ENCODE measurements at regions of chr22 and their contacts with region 1.

Region 1: DNA sequence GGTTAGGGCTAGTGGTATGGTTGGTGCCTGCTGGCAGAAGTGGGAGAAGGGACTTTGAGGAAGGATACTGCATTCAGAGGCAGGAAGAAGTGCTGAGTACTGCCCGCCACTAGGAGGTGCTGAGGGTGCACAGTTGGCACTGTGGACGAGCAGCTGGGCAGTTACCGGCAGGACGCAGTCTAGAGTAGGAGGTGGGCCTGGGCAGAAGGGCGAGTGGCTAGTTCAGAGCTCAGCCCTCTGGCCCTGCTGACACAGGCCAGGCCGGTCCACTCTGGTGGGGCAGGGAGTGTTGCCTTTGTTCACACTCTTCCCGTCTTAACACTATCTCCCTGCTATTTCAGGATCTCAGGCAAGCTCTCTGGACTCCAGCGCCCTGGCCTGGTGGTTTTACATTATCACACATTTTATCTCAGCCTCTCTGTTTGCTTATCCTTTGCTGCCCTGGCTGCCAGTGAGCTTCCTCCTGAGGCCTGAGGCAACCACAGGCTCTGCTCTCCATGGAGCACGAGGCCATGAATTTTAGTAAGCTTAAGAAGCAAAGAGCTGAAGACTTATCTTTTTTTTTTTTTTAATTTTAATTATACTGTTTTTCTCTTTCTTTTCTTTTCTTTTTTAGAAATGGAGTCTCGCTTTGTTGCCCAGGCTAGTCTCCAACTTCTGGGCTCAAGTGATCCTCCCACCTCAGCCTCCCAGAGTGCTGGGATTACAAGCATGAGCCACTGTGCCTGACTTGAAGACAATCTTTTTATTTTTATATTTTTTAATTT is 26.9 kb downstream of the SNAP29 start:
- DNase-seq: peak; percentile 89
- ATAC-seq: peak; percentile 98
- H3K4me3 Mint-ChIP-seq: no peak overlapping the region
- H3K27ac Mint-ChIP-seq: peak overlapping the region; percentile 68
- H3K4me1 Mint-ChIP-seq: peaks cover 3% of the 10 kb centered on the region; the same call in 1 of the 2 replicates
- H3K27me3 Mint-ChIP-seq: no peaks in the 10 kb centered on the region
- CTCF ChIP-seq: peak; percentile 71

Region 2: DNA sequence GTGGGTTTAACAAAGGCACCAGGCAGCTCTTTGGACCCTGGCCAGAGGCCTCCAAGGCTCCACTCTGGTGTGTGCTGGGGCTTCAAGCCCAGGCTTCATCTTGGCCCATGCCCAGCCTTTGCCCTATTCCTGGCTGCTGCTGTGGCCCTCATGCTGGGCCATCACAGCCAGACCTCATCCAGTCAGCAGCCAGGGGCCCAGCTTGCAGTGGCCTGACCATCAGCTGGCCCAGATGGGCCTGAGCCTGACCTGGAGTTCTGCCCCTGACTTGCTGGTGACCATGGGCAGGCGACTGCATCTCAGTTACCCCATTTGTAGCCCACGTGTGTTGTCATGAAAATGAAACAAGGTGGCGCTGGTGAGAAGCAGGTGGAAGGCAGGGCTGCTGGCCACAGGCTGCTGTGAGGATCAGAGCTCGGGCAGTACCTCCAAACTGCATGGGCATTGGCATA is 302.2 kb before region 1 on chr22:
- CTCF ChIA-PET with region 1: no interaction called
- POLR2A ChIA-PET with region 1: no interaction called
- DNase-seq: peak; percentile 45
- ATAC-seq: peak; percentile 56; the same call in 1 of the 2 replicates
- H3K4me3 Mint-ChIP-seq: no peak overlapping the region
- H3K27ac Mint-ChIP-seq: no peak overlapping the region
- H3K4me1 Mint-ChIP-seq: no peaks in the 10 kb centered on the region
- H3K27me3 Mint-ChIP-seq: no peaks in the 10 kb centered on the region
- CTCF ChIP-seq: no peak

Region 3: DNA sequence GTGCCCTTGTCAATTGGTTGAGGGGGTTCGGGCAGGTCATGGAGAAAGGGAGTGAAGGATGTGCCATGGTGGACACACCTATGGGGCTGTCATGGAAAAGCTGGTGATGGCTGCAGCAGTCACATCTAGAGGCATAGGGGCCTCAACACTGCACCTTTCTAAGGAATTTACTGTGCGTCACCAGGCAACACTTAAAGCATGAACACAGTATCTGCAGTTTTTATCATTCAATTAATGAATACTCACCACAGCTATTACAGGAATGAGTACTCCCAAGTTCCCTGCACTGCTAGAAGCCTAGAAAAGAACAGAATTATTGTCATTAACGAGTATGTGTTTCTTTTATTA is 92.8 kb before region 1 on chr22:
- CTCF ChIA-PET with region 1: interaction called, 10 read pairs
- POLR2A ChIA-PET with region 1: no interaction called
- DNase-seq: no peak
- ATAC-seq: no peak
- H3K4me3 Mint-ChIP-seq: no peak overlapping the region
- H3K27ac Mint-ChIP-seq: no peak overlapping the region
- H3K4me1 Mint-ChIP-seq: no peaks in the 10 kb centered on the region
- H3K27me3 Mint-ChIP-seq: no peaks in the 10 kb centered on the region
- CTCF ChIP-seq: no peak

Region 4: DNA sequence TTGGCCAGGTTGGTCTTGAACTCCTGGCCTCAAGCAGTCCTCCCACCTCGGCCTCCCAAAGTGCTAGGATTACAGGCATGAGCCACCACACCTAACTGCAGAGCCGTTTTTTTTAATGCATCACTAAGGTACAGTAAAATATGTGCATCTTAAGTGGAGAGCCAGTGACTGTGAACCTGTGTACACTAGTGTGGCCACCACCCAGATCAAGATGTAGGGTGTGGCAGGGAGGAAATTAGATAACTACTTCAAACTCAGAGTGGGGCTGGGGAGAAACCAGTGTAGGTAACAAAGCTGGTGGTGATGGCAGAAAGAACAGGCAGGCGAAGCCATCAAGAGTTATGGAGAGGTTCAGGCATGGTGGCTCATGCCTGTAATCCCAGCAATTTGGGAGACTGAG is 12.5 kb before region 1 on chr22:
- CTCF ChIA-PET with region 1: interaction called, 19 read pairs
- POLR2A ChIA-PET with region 1: interaction called, 3 read pairs
- DNase-seq: no peak
- ATAC-seq: no peak
- H3K4me3 Mint-ChIP-seq: no peak overlapping the region
- H3K27ac Mint-ChIP-seq: no peak overlapping the region
- H3K4me1 Mint-ChIP-seq: no peaks in the 10 kb centered on the region
- H3K27me3 Mint-ChIP-seq: no peaks in the 10 kb centered on the region
- CTCF ChIP-seq: no peak

Region 5: DNA sequence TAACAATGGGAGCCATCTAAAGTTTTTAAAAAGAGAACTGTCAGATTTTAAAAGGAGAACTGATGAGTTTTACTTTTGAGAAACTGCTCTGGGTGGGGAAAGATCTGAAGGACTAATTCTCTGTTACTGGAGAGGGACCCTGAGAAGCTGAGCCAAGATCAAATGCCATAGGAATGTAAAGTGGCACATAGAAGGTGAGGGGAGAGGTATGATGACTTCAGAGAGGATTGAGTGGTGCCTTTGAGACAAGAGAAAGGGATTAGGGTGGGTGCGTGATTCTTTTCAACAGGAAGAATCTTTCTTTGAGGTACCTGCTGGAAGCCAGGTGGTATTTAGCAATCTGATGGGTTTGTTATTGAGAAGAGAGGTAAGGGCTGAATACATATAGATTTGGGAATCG is 40.5 kb after region 1 on chr22:
- CTCF ChIA-PET with region 1: interaction called, 15 read pairs
- POLR2A ChIA-PET with region 1: no interaction called
- DNase-seq: no peak
- ATAC-seq: peak; percentile 59
- H3K4me3 Mint-ChIP-seq: peak overlapping the region; percentile 4
- H3K27ac Mint-ChIP-seq: peak overlapping the region; percentile 63
- H3K4me1 Mint-ChIP-seq: peaks cover 46% of the 10 kb centered on the region
- H3K27me3 Mint-ChIP-seq: no peaks in the 10 kb centered on the region
- CTCF ChIP-seq: no peak

Region 6: GRCh38 chr22:20981787-20982562 is 96.2 kb after region 1 on chr22 and contains the start of gene LZTR1:
- CTCF ChIA-PET with region 1: interaction called, 19 read pairs
- POLR2A ChIA-PET with region 1: interaction called, 4 read pairs
- DNase-seq: peak; percentile 81
- ATAC-seq: peak; percentile 69
- H3K4me3 Mint-ChIP-seq: peak within 1 kb of the TSS; percentile 96
- H3K27ac Mint-ChIP-seq: peak within 1 kb of the TSS; percentile 85
- H3K4me1 Mint-ChIP-seq: peaks cover 30% of the 10 kb centered on the region
- H3K27me3 Mint-ChIP-seq: peaks cover 32% of the 10 kb centered on the region
- CTCF ChIP-seq: no peak
- total RNA-seq, gene LZTR1: 38.3 to 44.5 TPM (median 40.1 TPM) in 3 replicates

Region 7: GRCh38 chr22:21102659-21103267 is 217.0 kb after region 1 on chr22:
- CTCF ChIA-PET with region 1: interaction called, 10 read pairs
- POLR2A ChIA-PET with region 1: no interaction called
- DNase-seq: peak; percentile 95
- ATAC-seq: peak; percentile 99
- H3K4me3 Mint-ChIP-seq: peak overlapping the region; percentile 51
- H3K27ac Mint-ChIP-seq: no peak overlapping the region
- H3K4me1 Mint-ChIP-seq: peaks cover 22% of the 10 kb centered on the region
- H3K27me3 Mint-ChIP-seq: peaks cover 21% of the 10 kb centered on the region
- CTCF ChIP-seq: peak; percentile 82

Measured in WTC11 (cell line).